SK-N-SH (cell line): ENCODE measurements at regions of chr6 and their contacts with region 1.

Region 1: DNA sequence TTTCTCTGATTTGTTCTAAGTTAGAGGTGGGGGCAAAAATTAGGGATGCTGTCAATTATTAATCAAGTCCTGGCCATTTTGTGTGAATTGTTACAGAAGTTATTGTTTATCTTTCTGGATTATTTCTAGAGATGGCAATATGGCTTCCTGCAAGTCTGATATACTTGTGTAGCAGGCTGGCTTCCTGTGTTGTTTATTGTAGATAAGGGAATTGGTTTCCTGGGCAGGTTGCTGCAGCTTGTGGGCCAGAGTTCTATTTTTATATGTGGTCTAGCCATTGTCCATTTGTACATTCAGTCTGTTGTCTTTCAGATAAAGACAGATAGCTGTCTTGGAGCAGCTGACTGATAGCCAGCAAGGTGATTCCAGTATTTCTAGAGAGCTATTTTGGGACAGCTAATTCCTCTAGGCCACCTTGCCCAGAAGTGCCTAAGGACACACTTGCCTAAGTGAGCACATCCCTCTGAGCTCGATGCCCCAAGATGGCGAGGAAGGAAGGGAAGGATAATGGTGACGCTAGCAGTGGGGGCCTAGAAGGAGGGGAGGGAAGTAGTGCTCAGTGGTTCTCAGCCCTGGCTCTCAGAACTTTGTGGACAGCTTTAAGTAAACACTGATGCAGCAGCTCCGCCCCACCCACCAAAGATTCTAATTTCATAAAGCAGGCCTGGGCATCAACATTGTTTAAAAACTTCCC is 25.5 kb downstream of the DDO start:
- DNase-seq: no peak
- H3K4me3 ChIP-seq: no peak overlapping the region
- H3K27ac ChIP-seq: no peak overlapping the region
- H3K4me1 ChIP-seq: peaks cover 0 to 4% of the 10 kb centered on the region in 2 experiments; a peak in 2 of 4 replicates
- H3K27me3 ChIP-seq: no peaks in the 10 kb centered on the region
- CTCF ChIP-seq: no peak
- EP300 ChIP-seq: no peak
- RAD21 ChIP-seq: no peak

Region 2: DNA sequence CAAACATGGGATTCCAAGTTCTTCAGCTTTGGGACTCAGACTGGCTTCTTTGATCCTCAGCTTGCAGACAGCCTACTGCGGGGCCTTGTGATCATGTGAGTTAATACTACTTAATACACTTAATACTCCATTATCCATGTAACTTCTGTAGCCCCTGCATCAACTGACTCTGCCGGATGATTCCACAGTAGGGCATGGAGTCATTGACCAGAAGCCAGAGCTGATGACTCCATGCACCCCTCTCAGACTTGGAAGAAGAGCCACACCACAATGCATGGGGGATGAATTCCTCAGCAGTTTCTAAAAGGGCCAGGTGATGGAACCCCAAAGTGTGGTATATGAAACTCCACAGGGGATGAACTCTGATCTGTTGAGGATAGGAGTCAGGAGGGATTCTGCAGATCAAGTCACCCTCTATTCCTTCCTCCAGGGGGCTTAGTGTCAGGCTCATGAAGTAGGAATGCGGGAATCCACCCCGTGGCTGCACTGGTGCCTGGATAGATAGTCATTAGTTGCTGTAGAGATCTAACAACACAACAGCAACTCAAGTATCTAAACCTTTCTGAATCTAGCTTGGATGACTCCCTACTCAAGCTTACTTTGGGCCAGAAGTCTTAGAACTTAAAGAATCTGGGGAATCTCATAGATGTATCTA is 341.5 kb before region 1 on chr6:
- CTCF ChIA-PET with region 1: interaction called, 14 read pairs
- POLR2A ChIA-PET with region 1: no interaction called
- DNase-seq: no peak
- H3K4me3 ChIP-seq: no peak overlapping the region
- H3K27ac ChIP-seq: no peak overlapping the region
- H3K4me1 ChIP-seq: no peaks in the 10 kb centered on the region
- H3K27me3 ChIP-seq: no peaks in the 10 kb centered on the region
- CTCF ChIP-seq: no peak
- EP300 ChIP-seq: no peak
- RAD21 ChIP-seq: no peak

Region 3: DNA sequence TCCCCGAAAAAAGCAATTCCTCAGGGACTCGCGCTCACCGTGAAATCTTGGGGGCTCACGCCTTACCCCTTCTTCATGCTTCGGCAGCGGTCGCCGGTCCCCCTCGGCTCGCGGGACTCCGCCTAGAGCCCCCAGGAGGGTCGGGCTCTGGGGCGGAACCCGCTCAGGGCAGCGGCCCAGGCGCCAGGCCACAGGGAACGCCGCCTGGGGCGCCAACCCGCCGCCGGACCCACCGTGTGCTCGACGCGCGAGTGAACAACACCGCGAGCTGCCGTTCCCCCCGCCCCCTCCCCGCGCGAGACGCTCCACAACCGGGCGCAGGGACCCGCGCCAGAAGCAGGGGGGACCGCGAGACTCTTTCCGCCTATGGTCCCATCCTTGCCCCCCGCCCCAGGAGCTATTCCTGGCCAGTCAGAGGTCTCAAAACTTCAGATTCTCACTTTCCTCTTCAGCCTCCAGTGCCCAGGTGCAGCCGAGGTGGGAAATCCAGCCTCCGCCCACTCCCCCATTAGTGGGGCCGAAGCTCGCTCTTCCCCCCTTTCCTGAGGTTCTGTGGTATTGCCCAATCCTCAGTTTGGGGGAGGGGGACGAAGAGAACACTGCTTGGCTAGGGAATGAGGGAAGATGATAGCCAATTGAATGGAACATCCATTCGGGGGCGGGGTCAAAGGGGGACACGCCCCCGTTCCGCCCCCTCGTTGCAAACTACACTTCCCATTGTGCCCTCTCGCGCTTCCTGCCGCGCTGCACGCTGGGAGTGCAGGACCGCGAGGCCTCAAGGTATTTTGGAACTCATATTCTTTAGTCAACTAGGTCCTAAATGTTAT is 210.2 kb before region 1 on chr6 and contains the start of gene WASF1:
- CTCF ChIA-PET with region 1: interaction called, 63 read pairs
- POLR2A ChIA-PET with region 1: interaction called, 5 read pairs
- DNase-seq: peak; percentile 91
- H3K4me3 ChIP-seq: peak within 1 kb of the TSS; percentile 98 to 100
- H3K27ac ChIP-seq: peak within 1 kb of the TSS; percentile 94 to 99
- H3K4me1 ChIP-seq: peaks cover 11 to 40% of the 10 kb centered on the region in 2 experiments
- H3K27me3 ChIP-seq: no peaks in the 10 kb centered on the region
- CTCF ChIP-seq: no peak
- EP300 ChIP-seq: peak in 1 of 2 experiments; percentile 40; a peak in 1 of 4 replicates
- RAD21 ChIP-seq: no peak
- polyA plus RNA-seq, gene WASF1: 31.4 and 35.9 TPM in 2 replicates

Region 4: DNA sequence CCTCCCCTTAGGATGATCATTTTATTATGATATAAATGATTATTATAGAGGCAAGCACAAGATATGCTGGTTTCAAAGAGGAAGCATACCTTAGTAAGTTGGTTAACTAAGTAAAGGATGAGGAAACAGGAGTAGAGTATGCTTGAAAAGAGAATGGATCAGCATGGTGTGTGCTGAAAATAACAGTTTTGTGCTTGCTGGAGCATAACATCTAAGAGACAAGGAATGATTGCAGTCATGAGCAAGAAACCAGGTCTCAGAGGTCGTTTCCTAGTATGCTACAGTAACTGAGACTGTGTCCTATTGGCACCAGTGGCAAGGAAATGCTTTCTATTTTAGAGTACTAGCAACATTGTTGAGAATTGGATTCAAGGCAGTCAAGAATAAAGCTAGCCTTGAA is 175.5 kb before region 1 on chr6:
- CTCF ChIA-PET with region 1: no interaction called
- POLR2A ChIA-PET with region 1: no interaction called
- DNase-seq: no peak
- H3K4me3 ChIP-seq: no peak overlapping the region
- H3K27ac ChIP-seq: no peak overlapping the region
- H3K4me1 ChIP-seq: peaks cover 0 to 7% of the 10 kb centered on the region in 2 experiments; a peak in 1 of 4 replicates
- H3K27me3 ChIP-seq: no peaks in the 10 kb centered on the region
- CTCF ChIP-seq: no peak
- EP300 ChIP-seq: no peak
- RAD21 ChIP-seq: no peak

Region 5: GRCh38 chr6:110404607-110405006 is 14.8 kb after region 1 on chr6:
- CTCF ChIA-PET with region 1: interaction called, 29 read pairs
- POLR2A ChIA-PET with region 1: no interaction called
- DNase-seq: no peak
- H3K4me3 ChIP-seq: no peak overlapping the region
- H3K27ac ChIP-seq: no peak overlapping the region
- H3K4me1 ChIP-seq: peaks cover 0 to 5% of the 10 kb centered on the region in 2 experiments; a peak in 1 of 4 replicates
- H3K27me3 ChIP-seq: no peaks in the 10 kb centered on the region
- CTCF ChIP-seq: no peak
- EP300 ChIP-seq: no peak
- RAD21 ChIP-seq: no peak

Region 6: GRCh38 chr6:110537208-110538123 is 147.6 kb after region 1 on chr6:
- CTCF ChIA-PET with region 1: no interaction called
- POLR2A ChIA-PET with region 1: no interaction called
- DNase-seq: no peak
- H3K4me3 ChIP-seq: 0 out of 4 replicates have a peak overlapping the region, but pooled peaks of 1 of the 2 experiments have one; percentile 0
- H3K27ac ChIP-seq: peak overlapping the region; percentile 65 to 99
- H3K4me1 ChIP-seq: peaks cover 12 to 25% of the 10 kb centered on the region in 2 experiments
- H3K27me3 ChIP-seq: no peaks in the 10 kb centered on the region
- CTCF ChIP-seq: no peak
- EP300 ChIP-seq: peak; percentile 32 to 78; a peak in 2 of 4 replicates
- RAD21 ChIP-seq: no peak